Naive thymus-derived CD4-positive, alpha-beta T cell (primary cell): ENCODE measurements at regions of chr9 and their contacts with region 1.

Region 1: GRCh38 chr9:133375724-133376654 is at the starts of genes STKLD1 and SURF4:
- DNase-seq: peak; percentile 86 to 99 (median 93)
- ATAC-seq: peak; percentile 95
- H3K4me3 ChIP-seq: peak within 1 kb of the TSS; percentile 58
- H3K4me3 Mint-ChIP-seq: peak within 1 kb of the TSS; percentile 84 to 98 (median 92)
- H3K27ac ChIP-seq: peak within 1 kb of the TSS; percentile 98
- H3K27ac Mint-ChIP-seq: peak within 1 kb of the TSS; percentile 72 to 99 (median 96)
- H3K4me1 ChIP-seq: peaks cover 31 to 38% of the 10 kb centered on the region in 2 donors
- H3K4me1 Mint-ChIP-seq: peaks cover 26 to 47% (median 34%) of the 10 kb centered on the region in 7 donors
- H3K27me3 ChIP-seq: no peaks in the 10 kb centered on the region
- H3K27me3 Mint-ChIP-seq: peaks cover 0 to 4% (median 0%) of the 10 kb centered on the region in 5 donors
- total RNA-seq, gene STKLD1: 1.1 to 1.8 (median 1.5) TPM
- total RNA-seq, gene SURF4: 72.5 to 196 (median 75.1) TPM

Region 2: GRCh38 chr9:133269537-133270362 is 106.2 kb before region 1 on chr9:
- CTCF ChIA-PET with region 1: no interaction called
- POLR2A ChIA-PET with region 1: no interaction called
- intact Hi-C with region 1: no loop called
- DNase-seq: no peak
- ATAC-seq: no peak
- H3K4me3 ChIP-seq: no peak overlapping the region
- H3K4me3 Mint-ChIP-seq: no peak overlapping the region
- H3K27ac ChIP-seq: no peak overlapping the region
- H3K27ac Mint-ChIP-seq: no peak overlapping the region
- H3K4me1 ChIP-seq: no peaks in the 10 kb centered on the region
- H3K4me1 Mint-ChIP-seq: peaks cover 0 to 14% (median 2%) of the 10 kb centered on the region in 7 donors
- H3K27me3 ChIP-seq: no peaks in the 10 kb centered on the region
- H3K27me3 Mint-ChIP-seq: peaks cover 38 to 55% (median 48%) of the 10 kb centered on the region in 5 donors

Region 3: DNA sequence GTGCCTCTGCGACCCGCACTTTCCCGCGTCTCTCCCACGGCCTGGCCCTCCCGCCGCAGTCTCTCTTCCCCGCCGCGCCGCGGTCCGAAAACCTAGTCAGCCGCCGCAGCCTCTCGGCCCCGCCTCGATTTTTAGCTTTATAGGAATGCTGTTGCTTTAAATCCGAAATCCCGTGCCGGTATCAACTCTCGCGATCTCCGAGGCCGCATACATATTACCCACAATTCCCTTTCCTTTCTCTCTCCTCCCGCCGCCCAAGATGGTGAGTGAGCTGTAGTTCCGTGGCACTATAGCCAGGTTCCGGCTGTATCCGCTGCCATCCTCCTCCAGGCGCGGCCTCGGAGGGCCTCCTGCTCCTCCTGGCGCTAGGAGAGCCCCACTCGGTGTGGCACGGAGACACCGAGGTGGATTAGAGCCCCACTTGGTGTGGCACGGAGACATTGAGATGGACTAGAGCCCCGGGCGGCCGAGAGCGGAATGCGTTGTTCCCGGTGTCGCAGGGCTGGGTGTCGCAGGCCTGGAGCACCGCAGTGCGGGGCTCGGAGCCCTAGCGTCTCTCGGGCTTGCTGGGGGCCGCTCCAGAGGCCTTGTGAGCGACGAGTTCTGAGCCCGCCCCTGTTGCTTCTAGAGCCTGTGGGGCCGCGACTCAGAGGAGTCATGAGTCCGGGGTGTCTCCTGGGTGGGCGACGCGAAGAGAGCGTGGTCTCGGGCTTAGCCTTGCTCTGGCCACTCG is 27.8 kb before region 1 on chr9 and contains the starts of genes MED22 and RPL7A:
- CTCF ChIA-PET with region 1: interaction called, 11 read pairs
- POLR2A ChIA-PET with region 1: interaction called, 185 read pairs
- intact Hi-C with region 1: loop called (anchors 1 kb)
- DNase-seq: peak; percentile 72 to 95 (median 92)
- ATAC-seq: peak; percentile 95
- H3K4me3 ChIP-seq: peak within 1 kb of the TSS; percentile 93
- H3K4me3 Mint-ChIP-seq: peak within 1 kb of the TSS; percentile 94 to 100 (median 98)
- H3K27ac ChIP-seq: peak within 1 kb of the TSS; percentile 98
- H3K27ac Mint-ChIP-seq: peak within 1 kb of the TSS; percentile 87 to 99 (median 97)
- H3K4me1 ChIP-seq: peaks cover 19 to 20% of the 10 kb centered on the region in 2 donors
- H3K4me1 Mint-ChIP-seq: peaks cover 23 to 46% (median 39%) of the 10 kb centered on the region in 7 donors
- H3K27me3 ChIP-seq: no peaks in the 10 kb centered on the region
- H3K27me3 Mint-ChIP-seq: peaks cover 0 to 2% (median 0%) of the 10 kb centered on the region in 5 donors
- total RNA-seq, gene MED22: 26.5 to 44.6 (median 32.8) TPM
- total RNA-seq, gene RPL7A: 2,002 to 2,815 (median 2,428) TPM

Region 4: GRCh38 chr9:133406480-133407307 is 30.7 kb after region 1 on chr9:
- CTCF ChIA-PET with region 1: no interaction called
- POLR2A ChIA-PET with region 1: no interaction called
- intact Hi-C with region 1: loop called in 1 of 2 experiments (anchors 2 kb)
- DNase-seq: peak; percentile 59 to 78 (median 71)
- ATAC-seq: peak; percentile 94
- H3K4me3 ChIP-seq: no peak overlapping the region
- H3K4me3 Mint-ChIP-seq: no peak overlapping the region
- H3K27ac ChIP-seq: no peak overlapping the region
- H3K27ac Mint-ChIP-seq: peak overlapping the region in 7 of 9 donors; percentile 1 to 86 (median 51)
- H3K4me1 ChIP-seq: no peaks in the 10 kb centered on the region
- H3K4me1 Mint-ChIP-seq: peaks cover 2 to 14% (median 10%) of the 10 kb centered on the region in 7 donors
- H3K27me3 ChIP-seq: no peaks in the 10 kb centered on the region
- H3K27me3 Mint-ChIP-seq: no peaks in the 10 kb centered on the region

Region 5: GRCh38 chr9:133459476-133460404 is 83.8 kb after region 1 on chr9 and contains the start of gene CACFD1:
- CTCF ChIA-PET with region 1: no interaction called
- POLR2A ChIA-PET with region 1: interaction called, 3 read pairs
- intact Hi-C with region 1: loop called (anchors 1 kb)
- DNase-seq: peak; percentile 81 to 91 (median 85)
- ATAC-seq: peak; percentile 87
- H3K4me3 ChIP-seq: peak within 1 kb of the TSS; percentile 88
- H3K4me3 Mint-ChIP-seq: peak within 1 kb of the TSS; percentile 88 to 94 (median 90)
- H3K27ac ChIP-seq: peak within 1 kb of the TSS; percentile 79
- H3K27ac Mint-ChIP-seq: peak within 1 kb of the TSS; percentile 54 to 94 (median 92)
- H3K4me1 ChIP-seq: peaks cover 6% of the 10 kb centered on the region in 2 donors
- H3K4me1 Mint-ChIP-seq: peaks cover 0 to 7% (median 4%) of the 10 kb centered on the region in 7 donors
- H3K27me3 ChIP-seq: no peaks in the 10 kb centered on the region
- H3K27me3 Mint-ChIP-seq: peaks cover 0 to 10% (median 0%) of the 10 kb centered on the region in 5 donors
- total RNA-seq, gene CACFD1: 0.56 to 4.7 (median 3.1) TPM